ENCODE measurements at regions of chr19 and their contacts with region 1.

Region 1: GRCh38 chr19:23758187-23759074 is at the start of gene ZNF681:
- DNase-seq: peak; percentile 85
- H3K4me3 ChIP-seq: peak within 1 kb of the TSS; percentile 72 to 86
- H3K27ac ChIP-seq: peak within 1 kb of the TSS; percentile 72 to 89
- H3K4me1 ChIP-seq: peaks cover 0 to 2% of the 10 kb centered on the region in 2 experiments; a peak in 2 of 4 replicates
- H3K27me3 ChIP-seq: no peaks in the 10 kb centered on the region
- CTCF ChIP-seq: no peak
- EP300 ChIP-seq: no peak
- RAD21 ChIP-seq: 0 out of 2 replicates have a peak, but pooled peaks have one; percentile 1
- polyA plus RNA-seq, gene ZNF681: 0.37 and 0.38 TPM in 2 replicates

Region 2: DNA sequence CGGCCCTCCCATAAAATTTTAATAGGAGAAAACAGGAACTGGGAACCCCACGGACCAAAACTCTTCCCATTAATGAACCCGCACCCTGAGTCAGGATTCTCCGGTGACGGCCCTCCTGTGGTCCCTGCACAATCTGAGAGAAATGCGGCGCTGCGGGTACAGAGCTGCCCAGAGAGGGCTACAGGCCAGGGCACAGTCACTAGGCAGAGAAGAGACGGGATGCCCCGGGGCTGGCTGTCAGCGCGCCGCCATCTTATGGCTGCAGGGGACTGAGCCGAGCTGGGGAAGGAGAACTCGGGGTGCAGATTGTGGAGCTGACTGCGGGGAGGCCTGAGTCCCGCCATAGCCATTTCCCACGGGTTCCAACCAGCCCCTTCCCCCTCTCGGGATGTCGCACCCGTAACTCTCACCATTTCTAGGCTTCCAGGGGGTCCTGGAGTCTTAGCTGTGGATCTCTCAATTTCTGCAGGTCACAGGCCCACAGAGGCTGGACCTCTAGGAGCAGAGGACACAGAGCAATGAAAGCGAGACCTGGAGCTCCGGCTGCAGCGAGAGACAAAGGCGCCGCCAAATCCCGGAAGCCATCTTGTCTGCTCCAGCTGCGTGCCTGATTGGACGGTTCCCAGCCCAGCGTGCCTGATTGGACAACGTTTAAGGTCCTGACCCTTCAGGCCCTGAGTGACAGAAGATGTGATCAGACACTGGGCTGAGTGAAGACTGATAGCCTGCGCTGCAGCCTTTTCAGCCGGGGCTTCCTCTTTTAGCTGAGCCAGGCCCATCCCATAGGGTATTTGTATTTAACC is 71.6 kb before region 1 on chr19 and contains the start of gene ZNF675:
- CTCF ChIA-PET with region 1: no interaction called
- POLR2A ChIA-PET with region 1: interaction called, 12 read pairs
- DNase-seq: peak; percentile 75
- H3K4me3 ChIP-seq: peak within 1 kb of the TSS; percentile 60 to 82
- H3K27ac ChIP-seq: peak within 1 kb of the TSS; percentile 85 to 91
- H3K4me1 ChIP-seq: peaks cover 0 to 4% of the 10 kb centered on the region in 2 experiments; a peak in 1 of 4 replicates
- H3K27me3 ChIP-seq: no peaks in the 10 kb centered on the region
- CTCF ChIP-seq: 0 out of 2 replicates have a peak, but pooled peaks have one; percentile 15
- EP300 ChIP-seq: no peak
- RAD21 ChIP-seq: 0 out of 2 replicates have a peak, but pooled peaks have one; percentile 4
- polyA plus RNA-seq, gene ZNF675: 1.8 and 3.1 TPM in 2 replicates

Region 3: DNA sequence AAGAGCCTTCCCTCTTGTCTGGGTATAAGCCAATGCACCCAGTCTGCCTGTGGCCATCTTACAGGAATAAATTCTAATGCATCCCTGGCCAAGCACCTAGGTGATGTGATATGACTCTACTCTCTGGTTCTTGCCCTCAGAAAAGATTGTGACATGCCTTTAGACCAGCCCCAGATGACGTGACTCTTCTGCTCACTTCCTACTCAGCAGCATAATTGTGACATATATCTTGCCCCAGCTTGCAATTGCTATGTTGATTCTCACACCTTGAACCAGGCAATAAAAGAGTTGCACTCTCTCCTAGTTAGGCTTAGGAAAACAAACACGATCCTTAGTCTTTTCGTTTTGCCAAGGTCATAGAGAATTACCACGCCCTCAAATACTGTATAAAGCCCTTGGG is 142.9 kb after region 1 on chr19:
- CTCF ChIA-PET with region 1: no interaction called
- POLR2A ChIA-PET with region 1: no interaction called
- DNase-seq: no peak
- H3K4me3 ChIP-seq: no peak overlapping the region
- H3K27ac ChIP-seq: no peak overlapping the region
- H3K4me1 ChIP-seq: no peaks in the 10 kb centered on the region
- H3K27me3 ChIP-seq: no peaks in the 10 kb centered on the region
- CTCF ChIP-seq: no peak
- EP300 ChIP-seq: no peak
- RAD21 ChIP-seq: no peak